Activated T-helper 2 cell treated with anti-CD3 and anti-CD28 coated beads, Interferon-gamma antibody, Interleukin-2, Interleukin-4, amounts not matched to agents 10 μg/mL and 5 μg/mL and 100 μg/mL, durations not matched to agents 14 hours and 24 hours and 36 hours (primary cell): ENCODE measurements at regions of chr1 and their contacts with region 1.

Region 1: DNA sequence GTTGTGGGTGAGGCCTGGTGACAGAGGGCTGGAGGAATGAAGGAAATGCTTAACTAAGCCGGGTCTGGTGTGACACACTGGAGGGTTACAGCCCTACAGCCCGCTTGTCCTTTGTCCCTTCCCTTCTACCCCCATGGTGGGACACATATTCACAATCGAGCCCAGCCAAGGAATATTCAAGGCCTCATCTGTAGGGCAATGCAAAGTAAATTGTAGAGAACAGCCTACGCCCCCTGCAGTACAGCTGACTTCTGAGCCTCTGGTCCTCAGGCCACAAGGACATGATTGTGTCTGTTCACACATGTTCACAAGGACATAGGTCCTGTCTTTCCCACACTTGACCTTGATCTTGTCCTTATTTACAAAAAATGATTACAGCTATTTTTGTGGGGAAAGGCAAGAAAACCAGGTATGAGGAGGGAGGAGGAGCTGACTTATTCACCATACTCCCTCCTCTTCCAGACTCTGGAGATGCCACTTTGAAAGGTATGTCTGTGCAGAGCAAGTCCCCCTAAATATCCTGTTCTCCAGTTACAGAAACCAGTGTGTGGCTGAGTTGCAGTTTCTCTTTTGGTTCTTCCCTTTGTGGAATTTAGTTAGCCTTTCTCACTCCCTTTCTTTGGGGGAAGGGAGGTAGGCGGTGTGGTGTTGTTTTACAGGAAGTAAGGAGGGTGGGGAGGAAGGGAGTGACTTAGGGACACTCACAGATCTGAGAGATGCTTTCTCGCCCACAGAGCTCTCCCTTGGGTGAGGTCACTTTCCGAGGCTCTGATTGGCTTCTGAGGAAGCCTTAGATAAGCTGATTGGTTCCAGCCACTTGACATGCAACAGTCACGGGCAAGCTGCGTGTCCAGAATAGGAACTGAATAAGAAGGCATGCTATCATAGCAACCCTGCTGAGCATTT is 14.6 kb downstream of the POLR3GL start:
- DNase-seq: peak; percentile 84
- H3K4me3 Mint-ChIP-seq: no peak overlapping the region
- H3K27ac Mint-ChIP-seq: no peak overlapping the region
- H3K4me1 Mint-ChIP-seq: peaks cover 31% of the 10 kb centered on the region
- H3K27me3 Mint-ChIP-seq: no peaks in the 10 kb centered on the region

Region 2: DNA sequence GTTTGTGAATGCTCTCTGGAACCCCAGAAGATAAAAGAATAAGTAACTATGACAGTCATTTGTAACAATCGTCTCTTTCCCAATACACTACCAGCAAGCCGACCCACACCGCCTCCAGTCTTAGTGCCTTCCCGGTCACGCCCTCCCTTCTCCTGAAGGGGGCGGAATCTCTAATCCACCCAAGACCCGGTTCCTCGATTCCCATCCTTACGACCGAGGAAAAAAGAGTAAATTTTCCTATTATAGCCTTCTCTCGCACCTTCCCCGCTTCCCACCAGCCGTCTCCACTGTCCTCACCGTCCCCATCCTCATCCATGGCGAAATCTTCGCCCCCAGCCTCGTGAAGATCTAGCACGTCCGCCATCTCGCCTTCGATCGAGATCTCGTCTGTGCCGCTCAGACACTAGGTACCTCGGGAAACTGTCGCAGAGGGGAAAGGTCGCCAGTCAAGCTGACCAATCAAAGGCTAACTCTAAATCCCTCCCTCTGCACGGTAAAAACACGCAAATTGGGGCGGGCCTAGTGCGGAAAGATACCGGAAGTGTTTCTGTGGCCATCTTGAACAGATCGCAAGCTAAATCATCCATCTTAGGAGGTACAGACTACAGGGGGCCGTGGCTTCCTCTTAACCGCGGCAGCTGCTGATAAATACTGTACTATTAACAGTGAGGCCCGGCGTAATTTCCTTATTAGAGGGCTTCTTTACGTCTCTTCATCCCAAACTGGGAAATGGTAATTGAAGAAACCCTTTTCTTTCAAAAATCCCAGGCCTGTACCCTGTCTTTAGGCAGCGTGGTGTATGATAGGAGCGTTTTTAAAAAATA is 51.8 kb before region 1 on chr1 and contains the start of gene RBM8A:
- intact Hi-C with region 1: loop called (anchors 1 kb)
- DNase-seq: peak; percentile 94
- H3K4me3 Mint-ChIP-seq: no peak within 1 kb of the TSS
- H3K27ac Mint-ChIP-seq: peak within 1 kb of the TSS; percentile 80
- H3K4me1 Mint-ChIP-seq: peaks cover 15% of the 10 kb centered on the region
- H3K27me3 Mint-ChIP-seq: no peaks in the 10 kb centered on the region
- total RNA-seq, gene RBM8A: 270 and 287 TPM in 2 replicates

Region 3: DNA sequence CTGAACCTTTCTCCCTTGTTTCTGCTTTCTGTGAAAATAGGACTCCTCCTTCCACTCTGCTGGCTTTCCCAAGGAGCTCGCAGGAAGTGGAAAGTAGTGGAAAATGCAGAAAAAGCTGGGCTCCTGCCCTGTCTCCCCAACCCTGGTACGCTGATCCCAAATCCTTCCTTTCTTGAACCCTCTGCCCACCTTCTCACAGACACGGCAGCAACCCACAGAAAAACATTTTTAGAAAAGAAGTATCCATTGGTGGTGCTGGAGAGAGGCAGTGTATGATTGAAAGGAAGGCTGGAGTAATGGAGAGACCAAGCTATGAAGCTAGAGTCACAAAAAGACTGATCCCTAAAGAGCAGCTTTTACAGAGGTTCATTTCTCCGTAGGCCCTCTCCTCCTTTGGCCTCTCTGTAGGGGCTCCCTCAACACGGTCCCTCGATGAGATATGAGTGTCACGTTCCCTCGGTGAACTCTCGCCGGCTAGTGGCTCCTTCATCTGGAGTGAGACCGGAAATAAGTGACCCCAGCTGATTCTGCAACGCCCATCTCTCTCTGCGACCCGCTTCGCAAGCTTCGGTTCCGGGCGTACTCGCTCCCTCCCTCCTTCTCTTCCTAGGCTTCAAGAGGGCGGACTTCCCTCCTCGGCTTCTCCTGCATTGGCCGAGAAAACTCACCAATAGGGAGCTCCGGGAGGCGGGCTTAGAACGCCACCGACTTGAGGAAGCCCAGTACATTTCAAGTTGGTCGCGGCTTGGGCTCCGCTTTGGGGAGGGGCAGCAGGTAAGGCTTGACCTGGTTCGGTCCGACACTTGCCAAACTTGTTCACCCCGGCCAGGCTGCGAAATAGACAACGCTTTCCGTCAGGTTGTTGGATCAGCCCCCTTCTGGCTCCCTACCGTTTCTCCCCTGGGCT is 14.9 kb before region 1 on chr1 and contains the starts of genes ANKRD34A and POLR3GL:
- intact Hi-C with region 1: loop called (anchors 1 kb)
- DNase-seq: peak; percentile 90
- H3K4me3 Mint-ChIP-seq: peak within 1 kb of the TSS; percentile 90
- H3K27ac Mint-ChIP-seq: peak within 1 kb of the TSS; percentile 81
- H3K4me1 Mint-ChIP-seq: peaks cover 42% of the 10 kb centered on the region
- H3K27me3 Mint-ChIP-seq: no peaks in the 10 kb centered on the region
- total RNA-seq, gene ANKRD34A: 4.1 TPM in 2 replicates
- total RNA-seq, gene POLR3GL: 13.2 and 14.7 TPM in 2 replicates

Region 4: GRCh38 chr1:146007506-146008133 is 28.5 kb after region 1 on chr1:
- intact Hi-C with region 1: loop called (anchors 1 kb)
- DNase-seq: no peak
- H3K4me3 Mint-ChIP-seq: no peak overlapping the region
- H3K27ac Mint-ChIP-seq: peak overlapping the region; percentile 88
- H3K4me1 Mint-ChIP-seq: peaks cover 26% of the 10 kb centered on the region
- H3K27me3 Mint-ChIP-seq: no peaks in the 10 kb centered on the region

Region 5: DNA sequence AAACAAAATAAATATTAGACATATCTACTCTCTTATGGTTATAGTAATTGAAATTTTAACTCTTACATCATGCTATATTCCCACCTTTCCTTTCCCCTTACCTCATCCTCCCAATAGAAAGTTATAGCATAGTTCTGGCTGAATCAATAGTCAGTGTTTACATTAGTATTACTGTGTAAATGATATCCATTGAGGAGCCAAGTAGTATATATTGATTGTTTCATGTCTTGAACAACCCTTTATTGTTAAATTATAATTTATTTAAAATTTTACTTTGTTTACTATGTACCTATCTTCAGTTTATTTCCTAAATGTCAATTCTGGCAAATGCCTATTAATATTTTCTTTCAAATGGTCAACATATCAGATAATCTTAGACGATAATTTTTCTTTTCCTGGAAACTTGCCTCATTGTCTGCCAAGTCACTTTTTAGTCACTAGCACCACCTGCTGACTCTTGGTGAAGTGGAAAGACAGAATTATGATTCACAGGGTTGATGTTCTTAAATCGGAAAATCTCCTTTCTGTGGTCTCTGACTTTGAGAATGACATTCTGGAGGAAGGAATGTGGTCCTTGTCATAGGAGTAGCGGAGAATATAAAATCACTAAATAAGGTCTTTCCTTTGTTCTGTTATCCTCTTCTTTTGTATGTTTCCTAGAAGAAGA is 33.8 kb after region 1 on chr1:
- intact Hi-C with region 1: loop called (anchors 1 kb)
- DNase-seq: no peak
- H3K4me3 Mint-ChIP-seq: no peak overlapping the region
- H3K27ac Mint-ChIP-seq: no peak overlapping the region
- H3K4me1 Mint-ChIP-seq: peaks cover 14% of the 10 kb centered on the region
- H3K27me3 Mint-ChIP-seq: peaks cover 24% of the 10 kb centered on the region

Region 6: GRCh38 chr1:146036965-146037646 is 58.0 kb after region 1 on chr1:
- intact Hi-C with region 1: loop called (anchors 1 kb)
- DNase-seq: peak; percentile 71
- H3K4me3 Mint-ChIP-seq: peak overlapping the region; percentile 97
- H3K27ac Mint-ChIP-seq: peak overlapping the region; percentile 90
- H3K4me1 Mint-ChIP-seq: peaks cover 41% of the 10 kb centered on the region
- H3K27me3 Mint-ChIP-seq: peaks cover 7% of the 10 kb centered on the region